A549 (cell line): ENCODE measurements at regions of chr14 and their contacts with region 1.

Region 1: DNA sequence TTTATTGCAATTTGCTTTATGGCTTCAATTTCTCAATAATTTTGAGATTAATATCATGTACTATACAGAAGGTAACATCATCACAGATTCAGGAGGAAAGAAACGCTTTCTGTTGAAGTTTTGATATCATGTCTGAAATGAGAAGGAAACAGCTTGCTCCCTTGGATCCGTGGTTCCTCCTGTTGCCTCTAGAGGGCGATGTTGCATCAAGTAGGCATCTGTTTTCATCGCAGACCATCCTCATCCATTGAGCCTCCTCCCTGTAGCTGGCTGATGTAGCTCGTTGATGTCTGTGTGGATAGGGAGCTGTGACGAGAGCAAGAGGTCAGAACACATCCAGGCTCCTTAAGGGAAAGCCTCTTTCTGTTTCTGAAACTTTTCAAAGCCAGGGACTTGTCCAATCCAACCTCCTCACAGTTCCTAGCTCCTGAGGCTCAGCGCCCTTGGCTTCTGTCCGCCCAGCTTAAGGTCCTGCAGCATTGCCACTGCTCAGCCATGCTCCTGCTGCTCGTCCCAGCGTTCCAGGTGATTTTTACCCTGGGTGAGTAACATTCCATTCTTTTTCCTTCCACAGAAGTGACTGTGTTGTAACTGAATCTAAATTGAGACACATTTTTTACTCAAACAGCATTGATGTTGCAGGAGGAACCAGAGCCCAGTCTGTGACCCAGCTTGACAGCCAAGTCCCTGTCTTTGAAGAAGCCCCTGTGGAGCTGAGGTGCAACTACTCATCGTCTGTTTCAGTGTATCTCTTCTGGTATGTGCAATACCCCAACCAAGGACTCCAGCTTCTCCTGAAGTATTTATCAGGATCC is 304.8 kb upstream of the OR4E1 start:
- DNase-seq: peak; percentile 29 to 62
- ATAC-seq: peak; percentile 62 to 86; a peak in 5 of 6 replicates
- H3K4me3 ChIP-seq: no peak overlapping the region
- H3K27ac ChIP-seq: no peak overlapping the region
- H3K4me1 ChIP-seq: no peaks in the 10 kb centered on the region
- CTCF ChIP-seq: peak; percentile 62
- EP300 ChIP-seq: no peak
- POLR2A ChIP-seq: no peak
- RAD21 ChIP-seq: peak; percentile 36 to 63; a peak in 3 of 5 replicates

Region 2: GRCh38 chr14:21891921-21892320 is 86.5 kb before region 1 on chr14:
- CTCF ChIA-PET with region 1: no interaction called
- POLR2A ChIA-PET with region 1: no interaction called
- DNase-seq: no peak
- ATAC-seq: no peak
- H3K4me3 ChIP-seq: no peak overlapping the region
- H3K27ac ChIP-seq: no peak overlapping the region
- H3K4me1 ChIP-seq: no peaks in the 10 kb centered on the region
- CTCF ChIP-seq: no peak
- EP300 ChIP-seq: no peak
- POLR2A ChIP-seq: no peak
- RAD21 ChIP-seq: no peak

Region 3: GRCh38 chr14:21997300-21997699 is 18.9 kb after region 1 on chr14:
- CTCF ChIA-PET with region 1: interaction called, 12 read pairs
- POLR2A ChIA-PET with region 1: no interaction called
- DNase-seq: peak in 1 of 2 experiments; percentile 65
- ATAC-seq: peak; percentile 82 to 94
- H3K4me3 ChIP-seq: no peak overlapping the region
- H3K27ac ChIP-seq: no peak overlapping the region
- H3K4me1 ChIP-seq: peaks cover 10% of the 10 kb centered on the region; the same call in 2 of the 3 replicates
- CTCF ChIP-seq: no peak
- EP300 ChIP-seq: no peak
- POLR2A ChIP-seq: no peak
- RAD21 ChIP-seq: peak in 1 of 2 experiments; percentile 14; a peak in 1 of 5 replicates

Region 4: DNA sequence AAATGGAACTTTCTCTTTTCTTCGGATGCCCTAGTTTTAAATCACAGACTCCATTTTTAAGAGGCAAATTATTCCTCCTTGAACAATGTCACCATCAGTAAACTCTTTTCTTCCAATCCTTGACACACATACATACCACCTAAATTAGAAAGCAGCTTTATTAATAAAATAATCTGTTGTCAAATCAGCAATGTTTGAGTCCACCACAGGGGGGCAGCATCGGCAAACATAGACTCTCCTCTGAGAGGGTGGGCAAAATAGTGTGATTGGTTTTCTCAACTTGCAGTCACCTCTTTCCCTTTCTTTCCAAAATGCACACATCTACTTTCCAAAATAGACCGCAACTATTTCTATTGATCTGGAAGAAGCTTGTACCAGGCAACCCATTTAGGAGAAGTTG is 133.6 kb after region 1 on chr14:
- CTCF ChIA-PET with region 1: no interaction called
- POLR2A ChIA-PET with region 1: no interaction called
- DNase-seq: peak in 1 of 2 experiments; percentile 8
- ATAC-seq: no peak
- H3K4me3 ChIP-seq: no peak overlapping the region
- H3K27ac ChIP-seq: no peak overlapping the region
- H3K4me1 ChIP-seq: no peaks in the 10 kb centered on the region
- CTCF ChIP-seq: peak; percentile 32; the same call in 2 of the 3 replicates
- EP300 ChIP-seq: no peak
- POLR2A ChIP-seq: no peak
- RAD21 ChIP-seq: peak in 1 of 2 experiments; percentile 35; a peak in 2 of 5 replicates